ENCODE measurements at regions of chr14 and their contacts with region 1.

Region 1: DNA sequence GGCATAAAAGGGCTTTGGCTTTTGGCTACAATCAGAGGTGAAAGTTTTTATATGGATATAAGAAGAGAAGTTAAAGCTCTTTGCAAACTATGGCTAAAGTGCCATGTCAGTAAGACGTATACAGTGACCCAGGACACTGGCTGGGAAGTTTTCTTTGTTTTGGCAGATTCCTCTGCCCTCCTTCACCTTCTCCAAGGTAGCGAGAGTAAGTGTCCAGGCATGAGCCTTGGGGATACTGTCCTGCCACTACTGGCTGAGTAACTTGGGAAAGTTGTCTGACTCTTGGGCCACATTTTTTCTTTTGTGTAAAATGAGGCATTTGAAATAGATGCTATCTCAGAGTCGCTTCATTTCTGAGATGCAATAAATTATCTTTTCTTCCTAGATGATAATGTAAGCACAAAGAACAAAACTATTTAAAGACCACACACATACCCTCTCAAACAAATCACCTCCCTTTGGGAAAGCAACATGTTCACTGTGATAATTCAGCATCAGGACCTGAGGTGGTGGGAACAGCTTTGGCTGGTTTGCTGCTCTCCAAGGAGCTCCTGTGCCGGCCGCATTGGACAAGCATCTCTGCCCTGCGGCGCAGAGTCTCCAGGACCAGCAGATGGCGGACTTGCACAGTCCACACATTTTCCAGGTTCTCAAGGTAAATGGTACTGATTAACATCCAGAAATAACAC is 106.3 kb downstream of the PTCSC3 start:
- DNase-seq: peak; percentile 79
- ATAC-seq: peak; percentile 84
- H3K4me3 Mint-ChIP-seq: no peak overlapping the region
- H3K27ac Mint-ChIP-seq: 0 out of 2 replicates have a peak overlapping the region, but pooled peaks have one; percentile 74
- H3K4me1 Mint-ChIP-seq: peaks cover 5% of the 10 kb centered on the region
- H3K27me3 Mint-ChIP-seq: no peaks in the 10 kb centered on the region
- CTCF ChIP-seq: peak; percentile 39

Region 2: DNA sequence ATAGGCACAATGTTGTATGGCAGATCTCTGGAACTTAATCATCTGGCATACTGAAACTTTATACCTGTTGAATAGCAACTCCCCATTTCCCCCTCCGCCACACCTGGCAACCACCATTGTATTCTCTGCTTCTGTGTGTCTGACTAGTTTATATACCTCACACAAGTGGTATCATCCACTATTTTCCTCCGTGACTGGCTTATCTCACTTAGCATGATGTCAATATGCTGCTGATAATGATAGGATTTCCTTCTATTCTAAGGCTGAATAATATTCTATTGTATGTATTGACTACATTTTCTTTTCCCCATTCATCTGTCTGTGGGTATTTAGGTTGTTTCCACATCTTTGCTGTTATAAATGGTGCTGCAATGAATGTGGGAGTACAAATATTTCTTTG is 222.5 kb before region 1 on chr14:
- CTCF ChIA-PET with region 1: no interaction called
- POLR2A ChIA-PET with region 1: no interaction called
- DNase-seq: no peak
- ATAC-seq: no peak
- H3K4me3 Mint-ChIP-seq: no peak overlapping the region
- H3K27ac Mint-ChIP-seq: no peak overlapping the region
- H3K4me1 Mint-ChIP-seq: peaks cover 4% of the 10 kb centered on the region; the same call in 1 of the 2 replicates
- H3K27me3 Mint-ChIP-seq: no peaks in the 10 kb centered on the region; the same call in 1 of the 2 replicates
- CTCF ChIP-seq: no peak

Region 3: DNA sequence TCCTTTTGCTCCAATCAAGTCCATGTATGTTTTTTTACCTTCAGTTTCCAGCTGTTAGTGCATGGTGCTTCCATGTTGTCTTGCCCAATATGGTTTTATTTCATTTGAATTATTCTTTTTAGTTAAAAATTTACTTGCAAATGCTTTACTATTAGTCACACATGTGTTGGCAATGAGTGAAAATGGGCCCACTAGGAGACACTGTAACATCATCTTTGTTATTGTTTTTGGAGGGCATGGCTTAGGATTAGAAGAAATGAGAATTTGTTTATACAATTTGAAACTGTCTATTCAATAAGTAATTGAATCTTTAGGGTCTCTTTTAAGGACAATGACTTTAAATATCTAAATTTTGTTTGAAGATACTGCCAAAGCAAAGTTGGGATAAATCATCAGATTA is 110.3 kb before region 1 on chr14:
- CTCF ChIA-PET with region 1: interaction called, 56 read pairs
- POLR2A ChIA-PET with region 1: no interaction called
- DNase-seq: no peak
- ATAC-seq: no peak
- H3K4me3 Mint-ChIP-seq: no peak overlapping the region
- H3K27ac Mint-ChIP-seq: no peak overlapping the region
- H3K4me1 Mint-ChIP-seq: peaks cover 7% of the 10 kb centered on the region
- H3K27me3 Mint-ChIP-seq: no peaks in the 10 kb centered on the region
- CTCF ChIP-seq: no peak

Region 4: GRCh38 chr14:36028218-36028617 is 42.0 kb before region 1 on chr14:
- CTCF ChIA-PET with region 1: interaction called, 11 read pairs
- POLR2A ChIA-PET with region 1: no interaction called
- DNase-seq: peak; percentile 34
- ATAC-seq: peak; percentile 70
- H3K4me3 Mint-ChIP-seq: no peak overlapping the region
- H3K27ac Mint-ChIP-seq: no peak overlapping the region
- H3K4me1 Mint-ChIP-seq: no peaks in the 10 kb centered on the region
- H3K27me3 Mint-ChIP-seq: no peaks in the 10 kb centered on the region; the same call in 1 of the 2 replicates
- CTCF ChIP-seq: no peak

Region 5: DNA sequence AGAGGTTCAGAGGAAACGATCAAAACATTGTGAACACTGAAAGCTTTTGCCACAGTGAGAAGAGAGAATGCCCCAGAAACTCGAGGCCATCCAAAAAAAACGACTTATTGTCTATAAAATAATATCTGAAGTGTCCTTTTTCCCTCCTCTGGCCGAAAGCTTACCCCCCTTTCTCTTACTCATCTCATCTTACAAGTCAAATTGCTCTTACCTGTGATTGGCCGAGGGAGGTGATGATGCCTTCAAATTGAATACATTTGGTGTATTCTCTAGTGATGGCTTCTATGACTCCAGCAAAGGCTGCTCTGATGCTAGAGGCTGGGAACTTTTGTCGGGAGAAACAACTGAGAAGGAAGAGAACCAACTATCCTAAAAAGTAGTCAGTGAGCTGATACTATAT is 15.7 kb after region 1 on chr14:
- CTCF ChIA-PET with region 1: interaction called, 19 read pairs
- POLR2A ChIA-PET with region 1: no interaction called
- DNase-seq: no peak
- ATAC-seq: no peak
- H3K4me3 Mint-ChIP-seq: no peak overlapping the region
- H3K27ac Mint-ChIP-seq: no peak overlapping the region
- H3K4me1 Mint-ChIP-seq: no peaks in the 10 kb centered on the region
- H3K27me3 Mint-ChIP-seq: peaks cover 5% of the 10 kb centered on the region; the same call in 1 of the 2 replicates
- CTCF ChIP-seq: no peak

Region 6: DNA sequence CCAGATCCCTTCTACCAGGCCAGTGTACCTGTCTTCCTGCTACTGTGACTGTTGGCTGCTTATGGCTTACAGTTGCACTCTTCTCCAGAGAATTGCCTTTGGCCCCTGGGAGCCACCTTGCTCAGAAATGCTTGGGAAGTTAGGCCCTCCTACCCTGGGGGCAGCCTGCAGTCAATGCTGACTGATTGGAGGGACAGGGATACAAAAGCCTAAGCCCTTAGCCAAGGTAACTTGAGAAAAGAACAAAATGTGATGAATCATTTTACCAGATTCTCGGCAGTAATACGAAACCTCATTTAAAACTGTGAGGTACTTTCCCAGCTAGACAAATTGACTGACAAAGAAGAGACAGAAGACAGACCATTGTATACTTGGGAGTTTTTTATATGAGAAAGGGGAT is 59.0 kb after region 1 on chr14:
- CTCF ChIA-PET with region 1: interaction called, 10 read pairs
- POLR2A ChIA-PET with region 1: no interaction called
- DNase-seq: peak; percentile 23
- ATAC-seq: peak; percentile 98
- H3K4me3 Mint-ChIP-seq: no peak overlapping the region
- H3K27ac Mint-ChIP-seq: peak overlapping the region; percentile 22; the same call in 1 of the 2 replicates
- H3K4me1 Mint-ChIP-seq: peaks cover 13% of the 10 kb centered on the region
- H3K27me3 Mint-ChIP-seq: no peaks in the 10 kb centered on the region; the same call in 1 of the 2 replicates
- CTCF ChIP-seq: no peak

Region 7: DNA sequence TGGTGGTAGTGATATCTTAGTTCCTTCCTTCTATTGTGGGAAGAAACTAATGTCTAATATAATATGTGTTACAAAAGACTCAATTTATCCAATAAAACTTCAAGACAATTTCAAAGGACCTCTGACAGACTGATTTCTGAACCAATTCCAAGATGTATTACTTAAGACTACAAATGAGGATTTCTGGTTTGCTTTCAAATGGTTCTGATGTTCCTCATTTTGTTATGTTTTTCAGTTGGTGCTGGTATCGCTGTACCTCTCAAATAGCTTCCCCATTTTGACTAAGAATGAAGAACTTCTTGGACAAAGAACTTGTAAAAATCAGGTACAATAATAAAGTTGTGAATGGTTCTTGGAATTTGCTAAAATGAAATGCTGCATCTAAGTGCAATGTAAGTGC is 269.6 kb after region 1 on chr14:
- CTCF ChIA-PET with region 1: no interaction called
- POLR2A ChIA-PET with region 1: no interaction called
- DNase-seq: no peak
- ATAC-seq: no peak
- H3K4me3 Mint-ChIP-seq: no peak overlapping the region
- H3K27ac Mint-ChIP-seq: no peak overlapping the region
- H3K4me1 Mint-ChIP-seq: no peaks in the 10 kb centered on the region
- H3K27me3 Mint-ChIP-seq: peaks cover 5% of the 10 kb centered on the region; the same call in 1 of the 2 replicates
- CTCF ChIP-seq: no peak

Region 8: GRCh38 chr14:36442824-36443241 is 372.7 kb after region 1 on chr14:
- CTCF ChIA-PET with region 1: interaction called, 10 read pairs
- POLR2A ChIA-PET with region 1: no interaction called
- DNase-seq: no peak
- ATAC-seq: peak; percentile 95
- H3K4me3 Mint-ChIP-seq: peak overlapping the region; percentile 39
- H3K27ac Mint-ChIP-seq: no peak overlapping the region
- H3K4me1 Mint-ChIP-seq: peaks cover 48% of the 10 kb centered on the region
- H3K27me3 Mint-ChIP-seq: peaks cover 95% of the 10 kb centered on the region
- CTCF ChIP-seq: no peak

Region 9: DNA sequence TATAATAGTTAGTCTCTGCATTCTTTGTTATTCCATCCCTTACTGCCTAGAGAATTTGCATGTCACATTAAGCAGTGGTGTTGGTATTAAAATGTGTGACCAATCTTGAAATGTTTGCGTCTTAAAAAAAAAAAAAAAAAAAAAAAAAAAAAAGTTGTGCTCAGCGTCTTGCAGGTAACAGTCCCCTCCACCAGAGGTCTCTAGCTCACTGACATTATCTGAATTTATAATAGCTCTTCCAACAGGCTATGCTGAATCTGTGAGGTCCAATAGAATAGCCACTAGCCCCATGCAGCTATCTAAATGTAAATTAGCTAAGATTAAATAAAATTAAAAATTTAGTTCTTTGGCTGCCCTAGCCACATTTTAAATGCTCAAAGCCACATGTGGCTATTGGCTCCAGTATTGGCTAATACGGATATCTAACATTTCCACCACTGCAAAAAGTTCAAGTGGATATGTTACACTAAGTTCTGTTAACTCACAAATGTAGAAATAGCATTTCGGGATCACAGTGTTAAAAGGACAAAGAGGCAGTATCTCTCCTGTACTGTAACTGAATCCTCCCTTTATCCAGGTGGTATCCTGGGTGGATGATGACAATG is 483.6 kb after region 1 on chr14:
- CTCF ChIA-PET with region 1: interaction called, 57 read pairs
- POLR2A ChIA-PET with region 1: no interaction called
- DNase-seq: no peak
- ATAC-seq: peak; percentile 79
- H3K4me3 Mint-ChIP-seq: no peak overlapping the region
- H3K27ac Mint-ChIP-seq: no peak overlapping the region
- H3K4me1 Mint-ChIP-seq: peaks cover 14% of the 10 kb centered on the region
- H3K27me3 Mint-ChIP-seq: peaks cover 3% of the 10 kb centered on the region; the same call in 1 of the 2 replicates
- CTCF ChIP-seq: peak; percentile 27; the same call in 1 of the 2 replicates